Sciatic nerve (tissue), 2 donors: ENCODE measurements at regions of chr1 and their contacts with region 1.

Region 1: DNA sequence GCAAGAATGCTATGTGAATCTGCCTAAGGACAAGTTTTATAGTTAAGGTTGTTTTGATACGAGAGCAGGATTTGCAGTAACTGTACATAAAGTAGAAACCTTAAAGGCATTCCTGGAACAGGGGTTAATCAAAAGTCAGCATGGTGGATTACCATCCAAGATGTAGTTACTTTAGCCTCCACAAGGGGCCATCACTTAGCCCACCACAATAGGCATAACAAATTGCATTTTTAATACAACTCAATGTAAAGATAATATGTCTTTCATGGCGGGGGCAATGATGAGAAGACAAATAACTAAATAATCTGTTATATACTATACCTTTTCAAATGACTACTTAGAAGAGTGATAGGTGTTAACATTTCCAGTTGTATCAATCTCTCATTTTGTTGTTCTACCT is 611.2 kb upstream of the ADGRL4 start:
- DNase-seq: no peak
- ATAC-seq: no peak

Region 2: GRCh38 chr1:79501140-79501539 is 116.6 kb before region 1 on chr1:
- intact Hi-C with region 1: no loop called
- DNase-seq: no peak
- ATAC-seq: peak; percentile 39

Region 3: GRCh38 chr1:79594121-79594698 is 23.6 kb before region 1 on chr1:
- intact Hi-C with region 1: loop called (anchors 1 kb)
- DNase-seq: no peak
- ATAC-seq: no peak